Naive thymus-derived CD4-positive, alpha-beta T cell (primary cell): ENCODE measurements at regions of chr3 and their contacts with region 1.

Region 1: GRCh38 chr3:128617557-128618397 is 32.8 kb downstream of the RPN1 start:
- DNase-seq: peak; percentile 94 to 100 (median 99)
- ATAC-seq: peak; percentile 96
- H3K4me3 ChIP-seq: peak overlapping the region; percentile 99
- H3K4me3 Mint-ChIP-seq: peak overlapping the region; percentile 94 to 99 (median 97)
- H3K27ac ChIP-seq: peak overlapping the region; percentile 88
- H3K27ac Mint-ChIP-seq: peak overlapping the region; percentile 92 to 98 (median 97)
- H3K4me1 ChIP-seq: peaks cover 16 to 19% of the 10 kb centered on the region in 2 donors
- H3K4me1 Mint-ChIP-seq: peaks cover 10 to 36% (median 33%) of the 10 kb centered on the region in 7 donors
- H3K27me3 ChIP-seq: no peaks in the 10 kb centered on the region
- H3K27me3 Mint-ChIP-seq: no peaks in the 10 kb centered on the region

Region 2: DNA sequence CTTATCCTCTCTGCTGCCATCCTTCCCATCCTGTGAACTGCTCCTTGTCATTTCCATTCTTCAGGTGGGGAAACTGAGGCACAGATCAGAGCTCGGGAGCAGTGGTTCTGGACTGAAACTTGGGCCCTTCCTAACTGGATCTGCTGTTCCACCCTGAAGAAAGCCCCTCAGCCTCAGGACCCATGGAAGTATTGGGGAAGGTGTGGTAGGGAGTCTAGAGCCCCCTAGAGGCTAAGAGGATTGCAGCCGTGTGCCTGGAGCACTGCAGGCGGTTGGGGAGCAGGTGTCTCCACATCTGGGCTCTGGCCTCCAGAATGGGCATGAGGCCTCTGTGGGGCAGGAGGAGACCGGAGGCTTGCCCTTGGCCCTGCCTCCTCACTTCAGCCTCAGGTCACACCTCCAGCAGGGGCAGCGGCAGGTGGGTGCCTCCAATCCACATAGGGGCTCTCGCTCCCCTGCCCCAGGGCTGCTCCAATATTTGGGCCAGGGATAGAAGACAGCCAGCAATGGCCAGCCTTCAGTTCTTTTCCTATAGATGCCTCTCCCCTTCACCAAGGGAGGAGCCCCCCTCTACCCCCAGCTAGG is 179.2 kb before region 1 on chr3:
- CTCF ChIA-PET with region 1: no interaction called
- POLR2A ChIA-PET with region 1: no interaction called
- intact Hi-C with region 1: no loop called
- DNase-seq: no peak
- ATAC-seq: no peak
- H3K4me3 ChIP-seq: no peak overlapping the region
- H3K4me3 Mint-ChIP-seq: no peak overlapping the region
- H3K27ac ChIP-seq: no peak overlapping the region
- H3K27ac Mint-ChIP-seq: no peak overlapping the region
- H3K4me1 ChIP-seq: no peaks in the 10 kb centered on the region
- H3K4me1 Mint-ChIP-seq: no peaks in the 10 kb centered on the region
- H3K27me3 ChIP-seq: peaks cover 3 to 9% of the 10 kb centered on the region in 2 donors
- H3K27me3 Mint-ChIP-seq: peaks cover 17 to 33% (median 18%) of the 10 kb centered on the region in 5 donors

Region 3: DNA sequence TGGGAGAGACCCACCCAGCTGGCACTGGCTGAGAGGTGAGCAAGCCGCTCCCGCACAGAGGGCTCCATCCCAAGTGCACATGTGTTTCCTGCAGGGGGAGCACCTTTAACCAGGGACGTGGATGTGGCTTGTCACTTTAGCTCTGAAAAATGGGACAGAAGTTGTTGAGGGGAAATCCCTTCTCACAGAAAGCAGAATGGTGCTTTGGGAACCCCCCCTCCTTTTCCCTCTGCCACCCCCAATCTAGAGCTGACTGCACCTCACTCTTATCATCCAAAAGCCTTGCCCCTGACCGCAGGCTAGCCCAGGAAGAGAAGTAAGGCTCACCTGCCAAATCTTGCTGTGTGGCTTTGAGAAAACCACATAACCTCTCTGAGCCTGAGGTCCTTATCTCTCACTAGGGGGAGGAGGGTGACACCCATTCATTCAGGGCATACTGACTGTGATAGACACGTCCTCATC is 45.1 kb before region 1 on chr3:
- CTCF ChIA-PET with region 1: no interaction called
- POLR2A ChIA-PET with region 1: no interaction called
- intact Hi-C with region 1: no loop called
- DNase-seq: peak in 2 of 9 donors; percentile 9 to 34
- ATAC-seq: peak; percentile 53
- H3K4me3 ChIP-seq: no peak overlapping the region
- H3K4me3 Mint-ChIP-seq: no peak overlapping the region
- H3K27ac ChIP-seq: no peak overlapping the region
- H3K27ac Mint-ChIP-seq: peak overlapping the region in 1 of 9 donors; percentile 32
- H3K4me1 ChIP-seq: peaks cover 0 to 13% of the 10 kb centered on the region in 2 donors
- H3K4me1 Mint-ChIP-seq: peaks cover 0 to 16% (median 12%) of the 10 kb centered on the region in 7 donors
- H3K27me3 ChIP-seq: no peaks in the 10 kb centered on the region
- H3K27me3 Mint-ChIP-seq: peaks cover 8 to 37% (median 28%) of the 10 kb centered on the region in 5 donors

Region 4: GRCh38 chr3:128650096-128651050 is 32.6 kb after region 1 on chr3 and contains the start of gene RPN1:
- CTCF ChIA-PET with region 1: interaction called, 7 read pairs
- POLR2A ChIA-PET with region 1: interaction called, 24 read pairs
- intact Hi-C with region 1: loop called (anchors 1 kb)
- DNase-seq: peak; percentile 81 to 98 (median 97)
- ATAC-seq: peak; percentile 98
- H3K4me3 ChIP-seq: peak within 1 kb of the TSS; percentile 94
- H3K4me3 Mint-ChIP-seq: peak within 1 kb of the TSS; percentile 83 to 92 (median 90)
- H3K27ac ChIP-seq: peak within 1 kb of the TSS; percentile 99
- H3K27ac Mint-ChIP-seq: peak within 1 kb of the TSS; percentile 73 to 94 (median 92)
- H3K4me1 ChIP-seq: peaks cover 12 to 17% of the 10 kb centered on the region in 2 donors
- H3K4me1 Mint-ChIP-seq: peaks cover 25 to 43% (median 37%) of the 10 kb centered on the region in 7 donors
- H3K27me3 ChIP-seq: no peaks in the 10 kb centered on the region
- H3K27me3 Mint-ChIP-seq: no peaks in the 10 kb centered on the region
- total RNA-seq, gene RPN1: 76.7 to 203 (median 88.5) TPM

Region 5: GRCh38 chr3:128794770-128795649 is 177.2 kb after region 1 on chr3:
- CTCF ChIA-PET with region 1: no interaction called
- POLR2A ChIA-PET with region 1: interaction called, 3 read pairs
- intact Hi-C with region 1: loop called (anchors 1 to 2 kb)
- DNase-seq: peak; percentile 26 to 81 (median 76)
- ATAC-seq: peak; percentile 98
- H3K4me3 ChIP-seq: no peak overlapping the region
- H3K4me3 Mint-ChIP-seq: peak overlapping the region; percentile 26 to 78 (median 51)
- H3K27ac ChIP-seq: peak overlapping the region; percentile 54
- H3K27ac Mint-ChIP-seq: peak overlapping the region; percentile 71 to 96 (median 85)
- H3K4me1 ChIP-seq: peaks cover 11 to 54% of the 10 kb centered on the region in 2 donors
- H3K4me1 Mint-ChIP-seq: peaks cover 32 to 74% (median 66%) of the 10 kb centered on the region in 7 donors
- H3K27me3 ChIP-seq: no peaks in the 10 kb centered on the region
- H3K27me3 Mint-ChIP-seq: no peaks in the 10 kb centered on the region

Region 6: GRCh38 chr3:128879125-128879969 is 261.6 kb after region 1 on chr3 and contains the start of gene ACAD9:
- CTCF ChIA-PET with region 1: no interaction called
- POLR2A ChIA-PET with region 1: interaction called, 7 read pairs
- intact Hi-C with region 1: loop called (anchors 1 kb)
- DNase-seq: peak; percentile 94 to 100 (median 96)
- ATAC-seq: peak; percentile 95
- H3K4me3 ChIP-seq: peak within 1 kb of the TSS; percentile 74
- H3K4me3 Mint-ChIP-seq: peak within 1 kb of the TSS; percentile 80 to 98 (median 89)
- H3K27ac ChIP-seq: peak within 1 kb of the TSS; percentile 97
- H3K27ac Mint-ChIP-seq: peak within 1 kb of the TSS; percentile 92 to 98 (median 97)
- H3K4me1 ChIP-seq: peaks cover 19 to 43% of the 10 kb centered on the region in 2 donors
- H3K4me1 Mint-ChIP-seq: peaks cover 40 to 83% (median 77%) of the 10 kb centered on the region in 7 donors
- H3K27me3 ChIP-seq: no peaks in the 10 kb centered on the region
- H3K27me3 Mint-ChIP-seq: peaks cover 0 to 6% (median 0%) of the 10 kb centered on the region in 5 donors
- total RNA-seq, gene ACAD9: 40.3 to 74.0 (median 63.0) TPM

Region 7: GRCh38 chr3:129160891-129161859 is 543.4 kb after region 1 on chr3 and contains the start of gene ISY1:
- CTCF ChIA-PET with region 1: no interaction called
- POLR2A ChIA-PET with region 1: no interaction called
- intact Hi-C with region 1: loop called in 1 of 2 experiments (anchors 1 kb)
- DNase-seq: peak; percentile 68 to 92 (median 89)
- ATAC-seq: peak; percentile 90
- H3K4me3 ChIP-seq: peak within 1 kb of the TSS; percentile 94
- H3K4me3 Mint-ChIP-seq: peak within 1 kb of the TSS; percentile 84 to 100 (median 98)
- H3K27ac ChIP-seq: peak within 1 kb of the TSS; percentile 98
- H3K27ac Mint-ChIP-seq: peak within 1 kb of the TSS; percentile 97 to 100 (median 99)
- H3K4me1 ChIP-seq: peaks cover 22 to 24% of the 10 kb centered on the region in 2 donors
- H3K4me1 Mint-ChIP-seq: peaks cover 18 to 53% (median 40%) of the 10 kb centered on the region in 7 donors
- H3K27me3 ChIP-seq: no peaks in the 10 kb centered on the region
- H3K27me3 Mint-ChIP-seq: peaks cover 0 to 4% (median 0%) of the 10 kb centered on the region in 5 donors
- total RNA-seq, gene ISY1: 27.6 to 65.1 (median 37.4) TPM

Region 8: DNA sequence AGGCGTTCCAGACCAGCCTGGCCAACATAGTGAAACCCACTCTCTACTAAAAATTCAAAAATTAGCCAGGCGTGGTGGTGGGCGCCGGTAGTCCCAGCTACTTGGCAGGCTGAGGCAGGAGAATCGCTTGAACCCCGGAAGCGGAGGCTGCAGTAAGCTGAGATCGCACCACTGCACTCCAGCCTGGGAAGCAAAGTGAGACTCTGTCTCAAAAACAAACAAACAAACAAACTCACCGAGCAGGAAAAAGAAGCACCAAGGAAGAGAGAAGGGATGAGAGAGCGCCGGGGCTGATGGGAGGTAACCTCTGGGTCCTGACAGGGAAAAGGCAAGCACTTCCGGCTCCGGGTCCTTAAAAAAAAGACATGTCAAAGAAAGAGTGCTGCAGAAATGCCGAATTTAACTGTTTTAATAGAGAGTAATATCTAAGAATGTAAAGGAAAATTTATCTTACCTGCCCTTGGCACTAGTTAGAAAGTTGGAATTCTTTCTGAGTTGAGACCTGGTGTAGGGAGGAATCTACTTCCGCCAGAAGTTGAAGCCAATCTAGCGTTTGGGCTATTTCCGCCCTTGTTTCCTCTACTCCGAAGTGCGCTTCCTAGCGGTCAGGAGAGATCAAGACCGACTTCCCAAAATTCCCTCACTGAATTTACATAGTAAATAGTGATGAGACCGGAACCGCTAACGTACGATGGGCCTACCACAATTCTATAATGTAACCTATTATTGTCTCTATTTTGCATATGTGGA is 781.5 kb after region 1 on chr3:
- CTCF ChIA-PET with region 1: no interaction called
- POLR2A ChIA-PET with region 1: no interaction called
- intact Hi-C with region 1: loop called in 1 of 2 experiments (anchors 5 kb)
- DNase-seq: peak; percentile 34 to 89 (median 81)
- ATAC-seq: peak; percentile 91
- H3K4me3 ChIP-seq: peak overlapping the region; percentile 70
- H3K4me3 Mint-ChIP-seq: peak overlapping the region; percentile 89 to 100 (median 97)
- H3K27ac ChIP-seq: peak overlapping the region; percentile 88
- H3K27ac Mint-ChIP-seq: peak overlapping the region; percentile 94 to 100 (median 98)
- H3K4me1 ChIP-seq: peaks cover 10 to 13% of the 10 kb centered on the region in 2 donors
- H3K4me1 Mint-ChIP-seq: peaks cover 23 to 47% (median 37%) of the 10 kb centered on the region in 7 donors
- H3K27me3 ChIP-seq: no peaks in the 10 kb centered on the region
- H3K27me3 Mint-ChIP-seq: no peaks in the 10 kb centered on the region